ENCODE measurements at regions of chr19 and their contacts with region 1.

Region 1: DNA sequence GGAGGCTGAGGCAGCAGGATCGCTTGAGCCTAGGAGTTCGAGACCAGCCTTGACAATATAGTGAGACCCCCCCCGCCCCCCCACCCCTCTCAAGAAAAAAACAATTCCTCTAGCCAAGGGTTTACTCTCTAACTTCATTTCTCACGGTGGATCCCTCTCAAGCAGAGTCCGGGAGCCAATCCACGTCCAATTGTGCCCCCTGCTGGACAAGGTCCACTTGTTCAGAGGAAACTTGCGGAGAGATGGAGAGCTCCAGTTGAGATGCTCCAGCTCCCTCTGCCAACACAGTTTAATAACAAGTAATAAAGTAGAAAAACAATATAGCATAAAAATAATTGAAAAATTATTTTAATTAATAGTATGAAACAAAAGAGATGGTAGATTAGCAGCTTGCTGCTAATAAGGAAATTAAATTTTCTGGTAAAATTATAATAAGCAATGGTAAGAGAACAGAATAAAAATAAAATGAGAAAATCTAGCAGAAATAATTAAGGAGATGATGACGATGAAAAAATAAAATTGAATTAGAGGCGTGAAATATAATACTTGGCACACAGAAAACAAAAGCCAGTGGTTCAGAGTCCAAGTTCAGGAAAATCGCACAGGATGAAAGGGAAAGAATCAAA is 14.5 kb upstream of the SIGLEC14 start:
- DNase-seq: peak; percentile 61
- H3K4me3 ChIP-seq: no peak overlapping the region; a peak in 1 of 4 replicates
- H3K27ac ChIP-seq: no peak overlapping the region
- H3K4me1 ChIP-seq: no peaks in the 10 kb centered on the region
- H3K27me3 ChIP-seq: peaks cover 8% of the 10 kb centered on the region; the same call in 1 of the 2 replicates
- CTCF ChIP-seq: peak; percentile 66
- EP300 ChIP-seq: no peak
- RAD21 ChIP-seq: peak; percentile 76

Region 2: DNA sequence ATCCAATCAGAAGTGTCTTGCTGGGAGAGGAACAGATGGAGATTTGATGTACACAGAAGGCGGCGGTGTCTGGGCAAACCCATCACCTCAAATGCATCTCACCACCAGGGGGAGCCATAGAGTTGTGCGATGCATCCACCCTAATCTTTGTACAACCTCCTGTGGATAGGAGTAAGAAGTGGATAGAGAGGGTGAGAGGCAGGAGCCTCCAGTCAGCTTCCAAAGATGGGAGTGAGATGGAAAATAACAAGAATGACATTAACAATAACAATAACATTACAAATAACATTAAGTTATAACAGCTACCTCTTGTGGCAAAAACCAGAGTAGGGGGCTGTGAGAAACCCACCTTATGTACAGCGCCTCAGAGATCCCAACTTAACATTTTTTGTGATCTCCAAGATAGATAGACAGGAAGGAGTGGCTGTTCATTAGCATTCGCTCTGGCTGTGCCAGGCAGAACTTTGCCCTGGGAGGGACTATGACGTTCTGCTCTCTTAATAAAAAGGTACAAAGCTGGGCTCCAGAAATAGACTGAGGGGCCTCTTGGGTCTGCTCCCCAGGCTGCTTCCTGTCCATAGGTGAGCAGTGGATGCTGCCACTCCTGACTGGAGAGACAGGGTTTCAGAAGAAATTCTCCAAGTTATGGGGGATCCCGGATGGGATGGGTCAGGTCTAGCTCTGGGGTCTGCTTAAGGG is 187.9 kb before region 1 on chr19:
- CTCF ChIA-PET with region 1: interaction called, 137 read pairs
- POLR2A ChIA-PET with region 1: no interaction called
- DNase-seq: peak; percentile 69
- H3K4me3 ChIP-seq: no peak overlapping the region
- H3K27ac ChIP-seq: no peak overlapping the region
- H3K4me1 ChIP-seq: no peaks in the 10 kb centered on the region
- H3K27me3 ChIP-seq: peaks cover 20% of the 10 kb centered on the region; the same call in 1 of the 2 replicates
- CTCF ChIP-seq: peak; percentile 81
- EP300 ChIP-seq: no peak
- RAD21 ChIP-seq: peak; percentile 71

Region 3: GRCh38 chr19:51514866-51515481 is 146.1 kb before region 1 on chr19:
- CTCF ChIA-PET with region 1: interaction called, 16 read pairs
- POLR2A ChIA-PET with region 1: no interaction called
- DNase-seq: peak; percentile 51
- H3K4me3 ChIP-seq: no peak overlapping the region
- H3K27ac ChIP-seq: no peak overlapping the region
- H3K4me1 ChIP-seq: no peaks in the 10 kb centered on the region
- H3K27me3 ChIP-seq: peaks cover 15% of the 10 kb centered on the region; the same call in 1 of the 2 replicates
- CTCF ChIP-seq: peak; percentile 79
- EP300 ChIP-seq: no peak
- RAD21 ChIP-seq: peak; percentile 43

Region 4: GRCh38 chr19:51681321-51682168 is 20.5 kb after region 1 on chr19:
- CTCF ChIA-PET with region 1: interaction called, 20 read pairs
- POLR2A ChIA-PET with region 1: no interaction called
- DNase-seq: no peak
- H3K4me3 ChIP-seq: no peak overlapping the region
- H3K27ac ChIP-seq: no peak overlapping the region
- H3K4me1 ChIP-seq: peaks cover 0 to 3% of the 10 kb centered on the region in 2 experiments; a peak in 1 of 4 replicates
- H3K27me3 ChIP-seq: no peaks in the 10 kb centered on the region; the same call in 1 of the 2 replicates
- CTCF ChIP-seq: no peak
- EP300 ChIP-seq: no peak
- RAD21 ChIP-seq: no peak

Region 5: GRCh38 chr19:51873097-51873496 is 212.0 kb after region 1 on chr19:
- CTCF ChIA-PET with region 1: no interaction called
- POLR2A ChIA-PET with region 1: no interaction called
- DNase-seq: no peak
- H3K4me3 ChIP-seq: peak overlapping the region in 1 of 2 experiments; percentile 17; a peak in 1 of 4 replicates
- H3K27ac ChIP-seq: no peak overlapping the region
- H3K4me1 ChIP-seq: no peaks in the 10 kb centered on the region
- H3K27me3 ChIP-seq: no peaks in the 10 kb centered on the region
- CTCF ChIP-seq: no peak
- EP300 ChIP-seq: no peak
- RAD21 ChIP-seq: no peak